Natural killer cell (primary cell): ENCODE measurements at regions of chr7 and their contacts with region 1.

Region 1: DNA sequence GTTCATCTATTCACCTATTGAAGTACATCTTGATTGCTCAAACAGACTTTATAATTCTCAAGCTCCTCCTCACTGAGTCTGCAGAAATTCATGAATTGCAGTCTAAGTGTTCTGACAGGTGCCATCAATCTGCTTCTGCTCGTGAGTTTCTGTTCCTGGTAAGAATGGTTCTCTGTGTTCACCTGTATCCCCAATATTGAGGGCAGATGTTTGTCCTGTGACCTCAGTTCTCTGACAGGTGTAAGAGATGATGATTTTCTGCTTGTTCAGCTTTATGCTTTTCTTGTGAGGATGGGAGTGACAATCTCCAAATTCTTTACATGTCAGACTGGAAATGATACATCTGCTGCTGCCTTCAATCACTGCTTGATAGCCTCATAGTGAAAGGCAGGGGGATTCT is 736.9 kb upstream of the COBL start:
- DNase-seq: no peak
- ATAC-seq: no peak
- H3K4me3 ChIP-seq: no peak overlapping the region
- H3K4me3 Mint-ChIP-seq: no peak overlapping the region
- H3K27ac ChIP-seq: no peak overlapping the region
- H3K27ac Mint-ChIP-seq: no peak overlapping the region
- H3K4me1 ChIP-seq: no peaks in the 10 kb centered on the region
- H3K4me1 Mint-ChIP-seq: no peaks in the 10 kb centered on the region
- H3K27me3 ChIP-seq: no peaks in the 10 kb centered on the region
- H3K27me3 Mint-ChIP-seq: no peaks in the 10 kb centered on the region
- CTCF ChIP-seq: no peak

Region 2: DNA sequence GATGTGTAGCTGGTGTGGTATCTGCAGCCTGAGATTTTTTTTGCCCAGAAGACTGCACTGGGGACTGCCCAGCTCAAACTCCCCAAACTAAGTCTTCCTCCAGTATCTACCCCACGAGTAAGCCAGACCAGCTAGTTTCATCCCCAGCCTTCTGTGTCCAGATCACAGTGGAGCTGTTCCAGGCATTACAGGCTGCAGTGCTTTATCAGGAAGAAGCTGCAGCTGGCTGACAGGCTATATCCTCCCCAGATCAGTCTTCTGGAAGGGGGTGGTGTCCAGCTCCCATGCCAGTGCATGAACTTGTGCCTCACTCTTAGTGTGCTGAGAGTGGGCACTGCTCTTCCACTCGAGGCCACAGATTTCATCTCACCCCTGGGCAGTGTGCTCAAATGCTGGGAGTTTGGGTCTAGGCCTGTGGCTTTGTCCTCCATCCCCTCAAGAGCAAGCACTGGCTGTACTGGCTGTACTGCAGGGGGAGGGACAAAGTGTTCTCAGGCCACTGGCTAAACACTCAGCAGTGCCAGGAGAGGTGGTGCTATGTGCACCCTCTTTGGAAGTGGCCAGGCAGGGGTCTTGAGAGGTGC is 57.8 kb before region 1 on chr7:
- intact Hi-C with region 1: loop called (anchors 10 kb)
- DNase-seq: no peak
- ATAC-seq: no peak
- H3K4me3 ChIP-seq: no peak overlapping the region
- H3K4me3 Mint-ChIP-seq: no peak overlapping the region
- H3K27ac ChIP-seq: no peak overlapping the region
- H3K27ac Mint-ChIP-seq: no peak overlapping the region
- H3K4me1 ChIP-seq: no peaks in the 10 kb centered on the region
- H3K4me1 Mint-ChIP-seq: no peaks in the 10 kb centered on the region
- H3K27me3 ChIP-seq: no peaks in the 10 kb centered on the region
- H3K27me3 Mint-ChIP-seq: no peaks in the 10 kb centered on the region
- CTCF ChIP-seq: no peak

Region 3: GRCh38 chr7:52209614-52210013 is 156.1 kb after region 1 on chr7:
- intact Hi-C with region 1: no loop called
- DNase-seq: no peak
- ATAC-seq: no peak
- H3K4me3 ChIP-seq: no peak overlapping the region
- H3K4me3 Mint-ChIP-seq: no peak overlapping the region
- H3K27ac ChIP-seq: no peak overlapping the region
- H3K27ac Mint-ChIP-seq: no peak overlapping the region
- H3K4me1 ChIP-seq: no peaks in the 10 kb centered on the region
- H3K4me1 Mint-ChIP-seq: no peaks in the 10 kb centered on the region
- H3K27me3 ChIP-seq: no peaks in the 10 kb centered on the region
- H3K27me3 Mint-ChIP-seq: no peaks in the 10 kb centered on the region
- CTCF ChIP-seq: no peak